Gastrocnemius medialis (tissue), 4 donors: ENCODE measurements at regions of chr17 and their contacts with region 1.

Region 1: DNA sequence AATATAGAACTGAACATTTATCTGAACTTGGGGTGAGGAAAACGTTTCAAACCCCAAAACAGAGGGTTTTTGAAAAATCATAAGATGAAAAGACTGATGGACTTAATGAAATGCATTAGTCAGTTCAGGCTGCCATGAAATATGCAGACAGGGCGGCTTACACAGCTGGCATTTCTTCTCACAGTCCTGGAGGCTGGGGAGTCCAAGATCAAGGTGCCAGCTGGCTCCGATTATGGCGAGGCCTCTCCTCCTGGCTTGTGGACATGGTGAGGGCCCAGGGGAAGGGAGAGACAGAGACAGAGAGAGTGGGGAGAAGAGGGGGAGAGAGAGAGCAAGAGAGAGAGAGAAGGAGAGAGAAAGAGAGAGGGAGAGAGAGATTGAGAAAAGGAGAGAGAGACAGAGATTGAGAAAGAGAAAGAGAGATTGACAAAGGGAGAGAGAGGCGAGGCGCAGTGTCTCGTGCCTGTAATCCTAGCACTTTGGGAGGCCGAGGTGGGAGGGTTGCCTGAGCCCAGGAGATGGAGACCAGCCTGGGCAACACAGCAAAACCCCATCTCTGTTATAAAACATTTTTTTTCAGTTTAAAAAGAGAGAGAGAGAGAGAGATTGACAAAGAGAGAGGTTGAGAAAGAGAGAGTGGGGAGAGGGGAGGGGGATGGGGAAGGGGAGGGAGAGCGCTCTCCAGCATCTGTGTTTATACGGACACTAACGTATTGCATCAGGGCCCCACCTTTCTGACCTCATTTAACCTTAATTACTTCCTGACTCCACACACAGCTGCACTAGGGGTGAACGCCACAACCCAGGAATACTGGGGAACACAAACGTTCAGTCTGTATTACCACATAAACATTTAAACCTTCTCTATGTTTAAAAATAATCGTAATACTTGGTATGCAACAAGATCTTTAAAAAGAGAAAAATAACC is 24.6 kb upstream of the RPH3AL start:
- DNase-seq: peak; percentile 36 to 72
- ATAC-seq: peak; percentile 69 to 73
- H3K4me3 ChIP-seq: no peak overlapping the region
- H3K27ac ChIP-seq: peak overlapping the region; percentile 33 to 62 (median 45)
- H3K4me1 ChIP-seq: no peaks in the 10 kb centered on the region
- H3K27me3 ChIP-seq: no peaks in the 10 kb centered on the region
- CTCF ChIP-seq: no peak
- POLR2A ChIP-seq: no peak

Region 2: GRCh38 chr17:333626-334396 is 43.4 kb before region 1 on chr17:
- in situ Hi-C with region 1: no loop called
- intact Hi-C with region 1: loop called (anchors 5 kb)
- DNase-seq: peak; percentile 72 to 78
- ATAC-seq: peak; percentile 76 to 77
- H3K4me3 ChIP-seq: peak overlapping the region; percentile 48 to 71 (median 54)
- H3K27ac ChIP-seq: peak overlapping the region; percentile 76 to 89 (median 84)
- H3K4me1 ChIP-seq: peaks cover 11 to 32% of the 10 kb centered on the region in 2 donors
- H3K27me3 ChIP-seq: peaks cover 6 to 16% (median 7%) of the 10 kb centered on the region in 3 donors
- CTCF ChIP-seq: no peak
- POLR2A ChIP-seq: peak; percentile 60 to 84